ENCODE measurements at regions of chr17 and their contacts with region 1.

Region 1: GRCh38 chr17:77372444-77373298 is 231.9 kb downstream of the SEC14L1 start:
- DNase-seq: peak; percentile 21 to 84 (median 61)
- ATAC-seq: peak; percentile 33
- H3K4me3 ChIP-seq: peak overlapping the region; percentile 68 to 99
- H3K4me3 Mint-ChIP-seq: peak overlapping the region; percentile 81
- H3K27ac ChIP-seq: peak overlapping the region; percentile 66 to 81
- H3K27ac Mint-ChIP-seq: peak overlapping the region; percentile 89
- H3K4me1 ChIP-seq: peaks cover 59% of the 10 kb centered on the region
- H3K4me1 Mint-ChIP-seq: peaks cover 56% of the 10 kb centered on the region
- H3K27me3 ChIP-seq: no peaks in the 10 kb centered on the region
- H3K27me3 Mint-ChIP-seq: no peaks in the 10 kb centered on the region
- CTCF ChIP-seq: no peak

Region 2: DNA sequence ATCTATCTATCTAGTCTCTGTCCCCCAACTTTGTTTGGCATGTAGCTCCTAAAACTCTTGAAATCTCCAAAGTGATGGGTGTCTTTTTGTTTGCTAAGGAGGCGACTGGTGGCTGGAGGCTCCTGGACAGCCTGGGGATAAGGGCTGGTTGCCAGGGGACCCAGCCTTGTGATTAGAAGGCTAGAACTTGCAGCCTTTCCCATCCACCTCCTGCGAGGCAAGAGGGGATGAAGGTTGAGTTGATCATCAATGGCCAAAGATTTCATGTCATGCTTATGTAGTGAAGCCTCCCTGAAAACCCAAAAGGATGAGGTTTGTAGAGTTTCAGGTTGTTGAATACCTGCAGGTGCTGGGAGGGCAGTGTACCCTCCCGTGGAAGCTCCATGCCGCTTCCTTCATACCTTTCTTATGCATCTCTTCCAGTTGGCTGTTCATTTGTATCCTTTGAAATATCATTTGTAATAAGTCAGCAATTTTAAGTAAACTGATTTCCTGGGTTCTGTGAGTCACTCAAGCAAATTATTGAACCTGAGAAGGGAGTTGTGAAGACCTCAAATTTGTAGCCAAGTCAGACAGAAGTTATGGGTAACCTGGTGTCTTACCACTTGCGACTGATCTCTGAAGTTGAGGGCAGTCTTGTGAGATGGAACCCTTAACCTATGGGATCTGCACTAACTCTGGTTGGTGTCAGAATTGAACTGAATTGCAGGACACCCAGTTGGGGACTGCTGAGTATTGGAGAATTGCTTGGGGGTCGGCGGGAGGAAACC is 29.5 kb before region 1 on chr17:
- CTCF ChIA-PET with region 1: interaction called, 3 read pairs
- POLR2A ChIA-PET with region 1: interaction called, 5 read pairs
- intact Hi-C with region 1: loop called in 1 of 2 experiments (anchors 2 kb)
- DNase-seq: peak in 4 of 9 experiments; percentile 9 to 48 (median 34)
- ATAC-seq: no peak
- H3K4me3 ChIP-seq: no peak overlapping the region
- H3K4me3 Mint-ChIP-seq: peak overlapping the region; percentile 65
- H3K27ac ChIP-seq: peak overlapping the region in 1 of 2 experiments; percentile 44
- H3K27ac Mint-ChIP-seq: peak overlapping the region; percentile 88
- H3K4me1 ChIP-seq: peaks cover 53% of the 10 kb centered on the region
- H3K4me1 Mint-ChIP-seq: peaks cover 60% of the 10 kb centered on the region
- H3K27me3 ChIP-seq: no peaks in the 10 kb centered on the region
- H3K27me3 Mint-ChIP-seq: no peaks in the 10 kb centered on the region
- CTCF ChIP-seq: no peak

Region 3: GRCh38 chr17:77382966-77383612 is 10.4 kb after region 1 on chr17:
- CTCF ChIA-PET with region 1: interaction called, 29 read pairs
- POLR2A ChIA-PET with region 1: interaction called, 54 read pairs
- intact Hi-C with region 1: loop called in 1 of 2 experiments (anchors 1 kb)
- DNase-seq: no peak
- ATAC-seq: no peak
- H3K4me3 ChIP-seq: peak overlapping the region; percentile 30 to 34
- H3K4me3 Mint-ChIP-seq: peak overlapping the region; percentile 75
- H3K27ac ChIP-seq: peak overlapping the region in 1 of 2 experiments; percentile 40
- H3K27ac Mint-ChIP-seq: peak overlapping the region; percentile 91
- H3K4me1 ChIP-seq: peaks cover 95% of the 10 kb centered on the region
- H3K4me1 Mint-ChIP-seq: peaks cover 89% of the 10 kb centered on the region
- H3K27me3 ChIP-seq: no peaks in the 10 kb centered on the region
- H3K27me3 Mint-ChIP-seq: no peaks in the 10 kb centered on the region
- CTCF ChIP-seq: no peak

Region 4: GRCh38 chr17:77404812-77405581 is 32.3 kb after region 1 on chr17:
- CTCF ChIA-PET with region 1: interaction called, 63 read pairs
- POLR2A ChIA-PET with region 1: interaction called, 38 read pairs
- intact Hi-C with region 1: no loop called
- DNase-seq: peak; percentile 62 to 94 (median 88)
- ATAC-seq: peak; percentile 69
- H3K4me3 ChIP-seq: peak overlapping the region; percentile 58 to 60
- H3K4me3 Mint-ChIP-seq: peak overlapping the region; percentile 93
- H3K27ac ChIP-seq: peak overlapping the region; percentile 65 to 76
- H3K27ac Mint-ChIP-seq: peak overlapping the region; percentile 99
- H3K4me1 ChIP-seq: peaks cover 96% of the 10 kb centered on the region
- H3K4me1 Mint-ChIP-seq: peaks cover 87% of the 10 kb centered on the region
- H3K27me3 ChIP-seq: no peaks in the 10 kb centered on the region
- H3K27me3 Mint-ChIP-seq: no peaks in the 10 kb centered on the region
- CTCF ChIP-seq: no peak

Region 5: GRCh38 chr17:77437017-77437416 is 64.3 kb after region 1 on chr17:
- CTCF ChIA-PET with region 1: interaction called, 10 read pairs
- POLR2A ChIA-PET with region 1: interaction called, 20 read pairs
- intact Hi-C with region 1: no loop called
- DNase-seq: peak in 6 of 9 experiments; percentile 42 to 61 (median 56)
- ATAC-seq: no peak
- H3K4me3 ChIP-seq: peak overlapping the region in 1 of 2 experiments; percentile 70
- H3K4me3 Mint-ChIP-seq: peak overlapping the region; percentile 95
- H3K27ac ChIP-seq: peak overlapping the region; percentile 46 to 66
- H3K27ac Mint-ChIP-seq: peak overlapping the region; percentile 97
- H3K4me1 ChIP-seq: peaks cover 83% of the 10 kb centered on the region
- H3K4me1 Mint-ChIP-seq: peaks cover 88% of the 10 kb centered on the region
- H3K27me3 ChIP-seq: no peaks in the 10 kb centered on the region
- H3K27me3 Mint-ChIP-seq: no peaks in the 10 kb centered on the region
- CTCF ChIP-seq: no peak

Region 6: DNA sequence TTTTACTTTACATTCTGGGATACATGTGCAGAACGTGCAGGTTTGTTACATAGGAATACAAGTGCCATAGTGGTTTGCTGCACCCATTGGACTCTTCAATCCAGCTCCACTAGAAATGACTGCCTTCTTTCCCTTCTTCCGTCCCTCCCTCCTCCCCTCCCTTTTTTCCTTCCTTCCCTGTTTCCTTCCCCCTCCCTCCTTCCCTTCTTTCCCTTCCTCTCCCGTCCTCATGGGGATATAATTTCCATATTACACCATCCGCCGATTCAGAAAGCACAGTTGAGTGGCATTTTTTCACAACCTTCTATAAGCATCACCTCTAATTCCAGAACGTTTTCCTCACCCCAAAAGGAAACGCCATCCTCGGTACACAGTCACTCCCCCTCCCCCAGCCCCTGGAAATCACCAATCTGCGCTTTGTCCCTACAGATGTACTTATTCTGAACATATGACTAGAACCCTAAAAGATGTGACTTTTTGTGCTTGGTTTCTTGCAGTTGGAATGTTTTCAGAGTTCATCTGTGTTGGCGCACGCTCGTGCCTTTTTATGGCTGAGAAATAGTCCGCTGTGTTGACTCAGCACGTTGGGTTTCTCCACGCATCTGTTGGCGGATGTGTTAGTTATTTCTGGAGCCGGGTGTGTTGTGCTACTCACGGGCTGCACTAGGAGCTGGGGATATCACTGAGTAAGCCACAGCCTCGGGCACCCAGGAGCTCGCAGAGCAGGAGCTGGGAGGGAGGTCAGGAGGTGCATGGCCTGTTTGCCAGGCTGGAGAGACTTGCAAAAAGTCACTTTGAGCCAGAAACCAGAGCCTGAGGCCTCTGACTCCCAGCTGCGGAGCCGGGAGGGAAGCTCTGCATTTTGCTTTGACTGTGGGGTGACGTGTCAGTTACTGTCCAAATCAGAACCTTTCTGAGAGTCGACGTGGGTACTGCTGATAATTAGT is 104.5 kb after region 1 on chr17:
- CTCF ChIA-PET with region 1: no interaction called
- POLR2A ChIA-PET with region 1: no interaction called
- intact Hi-C with region 1: no loop called
- DNase-seq: peak in 2 of 9 experiments; percentile 50 to 58
- ATAC-seq: peak; percentile 21
- H3K4me3 ChIP-seq: no peak overlapping the region
- H3K4me3 Mint-ChIP-seq: peak overlapping the region; percentile 54
- H3K27ac ChIP-seq: peak overlapping the region in 1 of 2 experiments; percentile 11
- H3K27ac Mint-ChIP-seq: peak overlapping the region; percentile 99
- H3K4me1 ChIP-seq: peaks cover 98% of the 10 kb centered on the region
- H3K4me1 Mint-ChIP-seq: peaks cover 86% of the 10 kb centered on the region
- H3K27me3 ChIP-seq: no peaks in the 10 kb centered on the region
- H3K27me3 Mint-ChIP-seq: no peaks in the 10 kb centered on the region
- CTCF ChIP-seq: no peak

Region 7: DNA sequence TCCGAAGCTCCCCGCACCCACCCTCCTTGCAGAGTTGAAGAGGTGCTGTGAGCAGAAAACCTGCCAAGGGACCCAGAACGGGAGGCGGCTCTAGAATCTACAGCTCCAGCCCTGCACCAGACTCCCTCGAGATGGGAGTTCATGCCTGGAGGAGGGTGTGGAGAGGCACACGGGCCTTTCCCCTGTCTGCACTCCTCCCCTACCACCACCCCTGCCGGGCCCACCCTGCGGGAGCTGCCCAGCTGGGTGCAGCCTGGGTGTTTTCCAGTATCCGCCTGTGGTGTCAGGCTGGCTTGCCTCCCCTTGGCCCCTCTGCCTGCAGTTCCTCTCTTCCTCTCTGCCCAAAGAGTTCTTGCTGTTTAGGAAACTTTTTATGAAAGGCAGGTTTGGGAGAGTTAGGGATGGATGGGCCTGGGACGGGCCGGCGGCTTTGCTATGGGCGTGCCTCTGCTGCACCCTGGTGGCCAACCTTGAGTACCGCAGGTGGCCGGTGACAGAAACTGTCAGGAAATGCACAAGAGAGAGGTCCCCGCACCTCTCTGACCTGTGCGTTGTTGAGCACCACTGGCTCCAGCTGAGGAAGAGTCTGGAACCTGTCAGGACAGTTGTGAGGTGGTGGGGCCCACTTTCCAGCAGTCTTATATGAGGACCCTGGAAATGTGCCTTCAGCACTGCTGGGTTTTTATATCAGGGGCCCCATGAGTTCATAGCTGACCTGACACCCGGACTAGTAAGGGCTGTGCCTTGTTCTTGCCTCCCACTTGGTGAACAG is 122.2 kb after region 1 on chr17:
- CTCF ChIA-PET with region 1: interaction called, 15 read pairs
- POLR2A ChIA-PET with region 1: interaction called, 4 read pairs
- intact Hi-C with region 1: loop called in 1 of 2 experiments (anchors 2 kb)
- DNase-seq: peak; percentile 52 to 89 (median 75)
- ATAC-seq: peak; percentile 75
- H3K4me3 ChIP-seq: no peak overlapping the region
- H3K4me3 Mint-ChIP-seq: no peak overlapping the region
- H3K27ac ChIP-seq: peak overlapping the region in 1 of 2 experiments; percentile 28
- H3K27ac Mint-ChIP-seq: peak overlapping the region; percentile 89
- H3K4me1 ChIP-seq: peaks cover 31% of the 10 kb centered on the region
- H3K4me1 Mint-ChIP-seq: peaks cover 25% of the 10 kb centered on the region
- H3K27me3 ChIP-seq: no peaks in the 10 kb centered on the region
- H3K27me3 Mint-ChIP-seq: no peaks in the 10 kb centered on the region
- CTCF ChIP-seq: peak; percentile 99

Region 8: GRCh38 chr17:77555741-77556291 is 183.1 kb after region 1 on chr17:
- CTCF ChIA-PET with region 1: no interaction called
- POLR2A ChIA-PET with region 1: no interaction called
- intact Hi-C with region 1: no loop called
- DNase-seq: peak in 1 of 9 experiments; percentile 30
- ATAC-seq: no peak
- H3K4me3 ChIP-seq: no peak overlapping the region
- H3K4me3 Mint-ChIP-seq: no peak overlapping the region
- H3K27ac ChIP-seq: no peak overlapping the region
- H3K27ac Mint-ChIP-seq: no peak overlapping the region
- H3K4me1 ChIP-seq: no peaks in the 10 kb centered on the region
- H3K4me1 Mint-ChIP-seq: no peaks in the 10 kb centered on the region
- H3K27me3 ChIP-seq: no peaks in the 10 kb centered on the region
- H3K27me3 Mint-ChIP-seq: no peaks in the 10 kb centered on the region
- CTCF ChIP-seq: no peak

Measured in CD8-positive, alpha-beta T cell (primary cell).